ENCODE measurements at regions of chr12 and their contacts with region 1.

Region 1: DNA sequence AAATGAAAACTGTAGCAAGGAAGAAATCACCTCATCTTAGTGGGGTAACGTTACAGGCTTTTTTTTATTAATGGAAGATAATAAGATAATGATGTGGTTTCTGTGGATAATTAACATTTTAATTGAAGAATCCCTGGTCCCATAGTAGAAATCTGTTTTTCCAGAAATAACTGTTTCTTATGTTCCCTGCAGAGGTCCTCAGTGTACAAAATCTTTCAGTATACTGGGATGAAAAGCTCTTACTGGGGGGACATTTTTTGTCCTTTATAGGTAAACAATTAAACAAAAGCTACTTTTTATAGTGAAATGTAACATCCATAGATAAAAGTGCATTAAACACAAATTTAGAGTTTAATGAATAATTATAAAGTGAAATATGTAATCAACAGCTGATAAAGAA is 312.2 kb downstream of the ATXN7L3B start:
- DNase-seq: no peak
- ATAC-seq: no peak
- H3K4me3 ChIP-seq: no peak overlapping the region
- H3K27ac ChIP-seq: no peak overlapping the region
- H3K4me1 ChIP-seq: no peaks in the 10 kb centered on the region
- H3K27me3 ChIP-seq: no peaks in the 10 kb centered on the region
- CTCF ChIP-seq: 0 out of 2 replicates have a peak, but pooled peaks have one; percentile 16
- POLR2A ChIP-seq: no peak
- RAD21 ChIP-seq: no peak

Region 2: GRCh38 chr12:75289753-75290152 is 440.0 kb after region 1 on chr12:
- CTCF ChIA-PET with region 1: no interaction called
- POLR2A ChIA-PET with region 1: no interaction called
- dilution Hi-C with region 1: no loop called
- in situ Hi-C with region 1: no loop called
- intact Hi-C with region 1: loop called (anchors 2 kb)
- DNase-seq: peak; percentile 31
- ATAC-seq: 0 out of 2 replicates have a peak, but pooled peaks have one; percentile 51
- H3K4me3 ChIP-seq: no peak overlapping the region
- H3K27ac ChIP-seq: no peak overlapping the region
- H3K4me1 ChIP-seq: no peaks in the 10 kb centered on the region
- H3K27me3 ChIP-seq: no peaks in the 10 kb centered on the region
- CTCF ChIP-seq: peak; percentile 54
- POLR2A ChIP-seq: no peak
- RAD21 ChIP-seq: peak; percentile 68

Region 3: DNA sequence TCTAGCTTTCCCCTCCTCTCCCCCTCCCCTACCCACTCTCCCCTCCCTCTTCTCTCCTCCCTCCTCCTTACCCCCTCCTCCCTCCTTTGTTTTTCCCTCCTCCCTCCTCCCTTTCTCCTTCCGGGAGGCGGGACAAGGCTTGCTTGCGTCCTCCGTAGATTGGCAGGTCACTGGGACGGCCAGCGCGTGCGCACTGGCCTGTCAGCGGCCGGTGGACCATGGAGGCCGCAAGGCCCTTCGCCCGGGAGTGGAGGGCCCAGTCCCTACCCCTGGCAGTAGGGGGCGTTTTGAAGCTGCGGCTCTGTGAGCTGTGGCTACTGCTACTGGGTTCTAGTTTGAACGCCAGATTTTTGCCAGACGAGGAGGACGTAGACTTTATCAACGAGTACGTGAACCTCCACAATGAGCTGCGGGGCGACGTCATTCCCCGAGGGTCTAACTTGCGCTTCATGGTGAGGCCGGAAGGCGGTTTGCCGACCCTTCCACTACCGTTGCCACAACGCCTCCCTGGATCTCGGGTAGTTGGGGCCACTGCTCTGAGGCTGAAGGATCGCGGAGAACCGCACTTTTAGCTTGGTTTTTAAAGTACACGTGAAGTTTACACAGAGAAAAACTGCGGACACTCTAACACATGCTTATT is 541.2 kb after region 1 on chr12 and contains the start of gene GLIPR1L2:
- CTCF ChIA-PET with region 1: no interaction called
- POLR2A ChIA-PET with region 1: no interaction called
- dilution Hi-C with region 1: no loop called
- in situ Hi-C with region 1: no loop called
- intact Hi-C with region 1: no loop called
- DNase-seq: peak; percentile 97
- ATAC-seq: peak; percentile 99
- H3K4me3 ChIP-seq: peak within 1 kb of the TSS; percentile 51
- H3K27ac ChIP-seq: peak within 1 kb of the TSS; percentile 81
- H3K4me1 ChIP-seq: 0 out of 2 replicates have a peak, but pooled peaks cover 2% of the 10 kb centered on the region
- H3K27me3 ChIP-seq: no peaks in the 10 kb centered on the region
- CTCF ChIP-seq: peak; percentile 91
- POLR2A ChIP-seq: no peak
- RAD21 ChIP-seq: peak; percentile 66
- total RNA-seq, gene GLIPR1L2: not detected in 2 replicates